PC-9 (cell line): ENCODE measurements at regions of chr18 and their contacts with region 1.

Region 1: GRCh38 chr18:58581265-58581664 is 47.6 kb downstream of the ALPK2 start:
- DNase-seq: peak; percentile 25 to 76
- H3K4me3 ChIP-seq: no peak overlapping the region
- H3K27ac ChIP-seq: no peak overlapping the region
- H3K4me1 ChIP-seq: peaks cover 25% of the 10 kb centered on the region
- H3K27me3 ChIP-seq: no peaks in the 10 kb centered on the region
- CTCF ChIP-seq: no peak

Region 2: DNA sequence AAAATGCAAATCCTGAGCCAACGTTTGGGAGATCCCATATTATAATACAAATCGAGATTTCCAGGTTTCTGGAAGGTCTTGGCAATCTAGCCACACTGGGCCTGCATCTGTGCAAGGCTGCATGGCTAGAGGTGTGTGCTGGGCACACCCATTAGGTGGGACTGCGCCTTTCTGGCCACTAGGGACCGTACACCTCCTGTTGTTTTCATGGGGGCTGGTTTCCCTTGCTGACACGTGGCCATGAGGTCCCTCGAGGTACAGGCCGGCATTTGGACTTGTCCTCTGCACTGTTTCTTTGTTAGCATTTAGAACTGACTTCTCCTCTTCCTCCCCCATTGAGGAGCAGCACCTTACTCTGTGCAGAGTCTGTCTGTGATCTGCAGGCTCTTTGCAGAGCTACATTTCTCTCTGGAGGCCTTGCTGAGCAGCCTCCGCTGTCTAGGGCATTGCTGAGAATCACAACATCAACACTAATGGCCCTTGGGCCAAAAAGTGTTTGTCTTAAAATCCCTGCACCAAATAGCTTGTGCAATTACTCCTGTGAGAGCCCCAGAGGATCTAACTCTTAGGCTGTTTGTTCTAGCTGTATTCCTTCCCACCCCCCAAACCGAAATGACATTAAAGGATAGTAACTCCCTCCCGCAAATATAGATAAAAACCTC is 406.0 kb before region 1 on chr18:
- CTCF ChIA-PET with region 1: no interaction called
- POLR2A ChIA-PET with region 1: interaction called, 15 read pairs
- intact Hi-C with region 1: no loop called
- DNase-seq: no peak
- H3K4me3 ChIP-seq: no peak overlapping the region
- H3K27ac ChIP-seq: no peak overlapping the region
- H3K4me1 ChIP-seq: peaks cover 29% of the 10 kb centered on the region
- H3K27me3 ChIP-seq: no peaks in the 10 kb centered on the region
- CTCF ChIP-seq: 0 out of 2 replicates have a peak, but pooled peaks have one; percentile 22

Region 3: DNA sequence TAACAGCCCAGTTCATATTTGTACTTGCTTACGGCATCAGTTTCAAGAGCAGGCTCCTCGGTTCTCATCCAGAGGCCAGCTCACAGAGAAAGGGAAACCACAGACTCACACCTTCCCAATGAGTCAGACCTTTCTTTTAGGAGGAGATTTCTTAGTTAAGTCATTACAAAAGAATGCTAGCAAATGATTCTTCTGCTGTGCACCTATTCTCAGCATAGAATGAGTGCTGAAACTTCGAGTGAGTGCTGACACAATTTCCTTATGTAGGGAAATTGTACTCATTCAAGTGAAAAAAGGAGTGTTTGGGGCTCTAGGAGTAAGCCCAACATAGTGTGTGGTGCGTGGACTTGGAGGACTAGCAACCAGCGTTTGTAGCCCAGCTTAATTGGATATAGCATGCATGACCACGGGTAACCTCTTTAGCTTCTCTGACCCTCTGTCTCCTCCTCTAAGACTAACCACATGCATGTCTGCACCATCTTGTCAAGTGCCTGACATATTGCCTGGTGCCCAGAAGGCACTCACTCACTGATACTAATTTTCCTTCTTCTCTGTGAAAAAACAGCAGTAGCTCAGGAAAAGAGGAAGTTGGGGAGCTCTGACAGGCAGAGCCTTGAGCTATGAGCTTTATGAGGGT is 39.4 kb before region 1 on chr18:
- CTCF ChIA-PET with region 1: no interaction called
- POLR2A ChIA-PET with region 1: no interaction called
- intact Hi-C with region 1: loop called (anchors 2 kb)
- DNase-seq: peak; percentile 50 to 99
- H3K4me3 ChIP-seq: no peak overlapping the region
- H3K27ac ChIP-seq: peak overlapping the region; percentile 88
- H3K4me1 ChIP-seq: peaks cover 39% of the 10 kb centered on the region
- H3K27me3 ChIP-seq: no peaks in the 10 kb centered on the region
- CTCF ChIP-seq: no peak

Region 4: DNA sequence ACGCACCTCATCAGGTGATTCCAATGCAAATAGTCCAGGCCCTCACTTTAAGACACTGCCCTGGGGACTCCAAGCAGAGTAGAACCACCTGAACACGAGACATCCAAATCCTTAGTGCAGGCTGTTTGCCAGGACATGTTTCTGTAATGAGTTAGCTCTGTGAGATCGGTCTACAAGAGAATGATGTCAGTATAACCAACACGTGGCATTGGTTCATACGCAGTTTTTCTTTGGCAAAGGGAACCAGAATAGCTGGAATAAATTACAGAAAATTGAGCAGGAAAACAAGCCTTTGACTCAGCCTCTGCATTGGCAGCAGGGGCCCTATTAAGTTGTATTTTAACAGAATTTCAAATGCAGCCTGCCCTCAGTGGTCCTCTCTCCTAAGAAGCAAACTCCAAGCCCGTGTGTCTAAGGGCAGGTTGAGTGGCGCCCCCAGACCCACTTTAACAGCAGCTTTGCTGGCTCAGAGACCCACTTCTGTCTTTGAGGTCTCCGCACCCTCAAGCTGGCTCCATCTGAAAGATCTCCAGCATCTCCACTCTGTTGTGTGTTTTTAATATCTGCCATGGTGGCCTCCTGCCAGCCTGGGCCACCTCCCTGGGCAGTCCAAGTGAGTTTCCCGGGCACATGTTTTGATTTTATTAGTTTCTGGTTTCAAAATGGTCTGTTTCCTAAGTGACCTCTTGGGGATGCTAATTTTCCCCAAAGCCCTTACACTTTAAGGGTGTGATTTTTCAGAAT is 13.6 kb before region 1 on chr18:
- CTCF ChIA-PET with region 1: no interaction called
- POLR2A ChIA-PET with region 1: no interaction called
- intact Hi-C with region 1: no loop called
- DNase-seq: peak in 1 of 2 experiments; percentile 3
- H3K4me3 ChIP-seq: no peak overlapping the region
- H3K27ac ChIP-seq: no peak overlapping the region
- H3K4me1 ChIP-seq: peaks cover 6% of the 10 kb centered on the region; the same call in 1 of the 2 replicates
- H3K27me3 ChIP-seq: no peaks in the 10 kb centered on the region
- CTCF ChIP-seq: no peak